Aorta (tissue), 5 donors: ENCODE measurements at regions of chr18 and their contacts with region 1.

Region 1: DNA sequence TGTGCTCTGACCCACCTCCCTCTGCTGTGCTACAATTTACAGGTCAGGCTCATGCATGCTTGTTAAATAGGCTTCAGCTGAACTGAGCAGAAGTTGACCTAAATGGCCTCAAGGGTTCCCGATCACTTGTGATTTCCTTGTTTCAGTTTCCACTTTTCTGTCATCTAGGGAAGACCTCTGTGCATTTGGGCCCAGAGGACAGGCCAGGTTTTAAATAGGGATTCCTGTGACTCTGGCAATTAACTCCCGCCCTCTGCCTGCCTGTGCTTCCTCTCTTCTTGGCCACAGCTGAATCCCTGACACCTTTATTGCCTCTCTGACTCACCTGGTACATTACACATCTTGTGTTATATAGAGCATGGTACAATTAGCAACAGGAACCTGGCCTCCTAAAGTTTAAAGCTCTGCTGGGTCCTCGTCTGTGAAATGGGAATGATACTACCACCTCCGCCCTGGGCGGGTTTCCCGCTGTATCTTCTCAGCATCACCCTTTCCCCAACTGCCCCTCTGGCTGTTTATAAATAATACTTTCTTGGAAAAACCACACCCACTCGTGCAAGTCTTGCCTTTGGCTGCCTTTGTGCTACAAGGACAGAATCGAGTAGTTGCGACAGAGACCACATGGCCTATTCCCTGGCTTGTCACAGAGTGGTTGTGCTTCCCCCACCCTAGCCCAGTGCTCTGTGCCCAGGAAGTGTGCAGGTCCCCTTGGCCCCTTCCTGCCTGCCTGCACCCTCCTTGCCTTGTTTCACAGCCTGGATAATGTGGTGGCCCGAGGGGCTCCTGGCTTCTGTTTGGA is 7.9 kb downstream of the CABLES1 start:
- DNase-seq: peak in 1 of 2 donors; percentile 75
- ATAC-seq: peak; percentile 69
- H3K4me3 ChIP-seq: no peak overlapping the region
- H3K27ac ChIP-seq: peak overlapping the region; percentile 31 to 88
- H3K4me1 ChIP-seq: peaks cover 8% of the 10 kb centered on the region in 2 donors
- H3K27me3 ChIP-seq: no peaks in the 10 kb centered on the region

Region 2: DNA sequence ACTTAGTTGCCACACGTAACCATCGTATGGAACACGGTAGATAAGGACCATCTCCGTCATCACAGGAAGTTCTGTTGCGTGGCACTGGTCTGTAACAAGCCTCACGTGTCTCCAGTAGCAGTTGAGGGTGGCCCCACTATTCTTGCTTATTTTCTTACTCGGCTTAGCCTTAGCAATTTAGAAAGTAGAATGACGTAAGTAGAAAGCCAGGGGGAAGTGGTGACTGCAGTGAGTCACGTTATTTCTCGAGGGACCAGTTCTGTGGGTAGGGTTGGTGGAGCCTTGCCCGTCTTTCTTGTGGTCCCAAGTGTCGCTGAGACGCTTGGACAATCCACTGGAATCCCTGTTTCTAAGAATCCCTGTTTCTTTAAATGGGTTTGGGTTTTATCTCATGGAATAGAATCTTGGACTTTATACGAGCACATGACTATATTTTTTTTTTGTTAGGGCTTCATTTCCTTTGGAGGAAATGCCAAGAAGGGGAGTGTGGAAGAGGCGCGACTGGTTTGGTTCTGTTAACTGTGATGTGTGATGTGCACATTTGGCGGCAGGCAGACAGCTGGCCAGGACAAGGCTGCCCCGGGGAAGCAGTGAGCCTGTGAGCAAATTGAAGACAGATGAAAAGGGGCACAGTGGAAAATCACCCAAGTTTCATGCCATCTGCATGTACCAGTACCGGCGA is 88.3 kb after region 1 on chr18:
- intact Hi-C with region 1: loop called (anchors 2 to 5 kb)
- DNase-seq: peak; percentile 86 to 89
- ATAC-seq: peak; percentile 90
- H3K4me3 ChIP-seq: no peak overlapping the region
- H3K27ac ChIP-seq: peak overlapping the region; percentile 88 to 99
- H3K4me1 ChIP-seq: peaks cover 3% of the 10 kb centered on the region in 2 donors
- H3K27me3 ChIP-seq: no peaks in the 10 kb centered on the region